Uterus (tissue), 4 donors: ENCODE measurements at regions of chr15 and their contacts with region 1.

Region 1: DNA sequence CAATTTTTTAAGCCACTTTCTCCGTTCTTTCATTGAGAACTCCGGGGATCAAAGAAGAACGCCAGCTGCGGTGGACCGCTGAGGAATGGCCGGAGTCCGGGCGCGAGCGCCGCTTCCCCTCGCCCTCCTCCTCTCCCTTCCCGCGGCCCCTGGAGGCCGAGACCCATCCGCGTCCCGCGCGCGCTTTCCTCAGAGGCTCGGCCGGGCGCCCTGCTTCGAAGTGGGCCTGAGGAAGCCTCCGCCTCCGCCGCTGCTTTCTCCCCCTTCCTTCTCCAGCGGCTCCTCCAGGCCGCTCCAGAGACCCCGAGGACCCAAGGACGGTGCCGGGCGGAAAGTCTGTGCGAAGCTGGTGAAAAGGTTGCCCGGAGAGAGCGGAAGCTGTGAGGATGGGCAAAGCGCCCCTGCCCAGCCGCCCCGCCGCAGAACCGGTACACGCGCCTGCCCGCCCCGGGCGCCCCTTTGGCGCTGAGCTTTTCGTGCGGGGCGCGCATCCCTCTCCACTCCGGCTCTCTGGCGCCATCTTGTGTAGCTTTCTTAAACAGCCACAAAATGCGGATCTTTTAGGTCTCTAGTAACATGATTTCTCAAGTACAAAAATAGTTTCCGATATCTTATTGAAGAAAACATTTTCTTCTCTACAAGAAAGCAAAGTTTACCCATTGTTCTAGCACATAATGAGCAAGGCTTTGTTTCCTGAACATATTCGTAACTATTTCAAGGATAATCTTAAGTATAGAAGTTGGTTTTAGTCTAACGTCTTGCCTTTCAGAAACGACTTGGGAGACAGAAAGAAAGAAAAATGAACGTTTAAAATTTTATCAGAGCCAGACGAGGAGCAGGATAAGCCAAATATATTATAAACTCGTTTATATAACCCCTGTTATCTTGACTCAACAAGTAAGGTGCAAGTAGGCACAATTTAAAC is 59.2 kb upstream of the FAM174B start:
- DNase-seq: peak; percentile 80 to 83
- H3K4me3 ChIP-seq: peak overlapping the region; percentile 38 to 57
- H3K27ac ChIP-seq: peak overlapping the region; percentile 87 to 93
- H3K4me1 ChIP-seq: no peaks in the 10 kb centered on the region
- H3K27me3 ChIP-seq: no peaks in the 10 kb centered on the region
- CTCF ChIP-seq: peak; percentile 87 to 96 (median 90)
- POLR2A ChIP-seq: peak in 1 of 2 donors; percentile 45

Region 2: DNA sequence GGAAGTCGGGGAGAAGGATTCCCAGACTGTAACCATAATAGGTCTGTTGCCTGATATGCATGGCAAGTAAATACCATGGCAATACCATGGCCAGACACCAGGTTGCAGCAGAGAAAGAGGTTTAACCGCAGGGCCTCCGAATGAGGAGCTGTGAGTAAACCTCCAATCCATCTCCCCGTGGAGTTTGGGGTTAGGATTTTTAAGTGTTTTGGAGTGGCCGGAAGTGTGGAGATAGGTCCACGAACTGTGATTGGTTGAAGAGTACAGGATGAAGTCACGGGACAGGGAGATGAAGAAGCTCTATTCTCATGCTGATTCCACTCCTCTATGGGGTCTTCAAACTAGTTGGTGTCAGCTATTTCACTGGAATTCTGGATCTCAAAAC is 193.1 kb before region 1 on chr15:
- intact Hi-C with region 1: loop called (anchors 10 kb)
- DNase-seq: peak; percentile 84 to 86
- H3K4me3 ChIP-seq: no peak overlapping the region
- H3K27ac ChIP-seq: no peak overlapping the region
- H3K4me1 ChIP-seq: no peaks in the 10 kb centered on the region
- H3K27me3 ChIP-seq: no peaks in the 10 kb centered on the region
- CTCF ChIP-seq: peak; percentile 76 to 91 (median 88)
- POLR2A ChIP-seq: no peak